Activated CD8-positive, alpha-beta T cell treated with anti-CD3 and anti-CD28 coated beads, Interleukin-2, amount 10 ng/mL, durations not matched to agents 7 days and 5 days (primary cell): ENCODE measurements at regions of chr11 and their contacts with region 1.

Region 1: GRCh38 chr11:64269380-64270234 is 14.9 kb downstream of the BAD start:
- DNase-seq: peak; percentile 97
- ATAC-seq: peak; percentile 74
- H3K4me3 Mint-ChIP-seq: peak overlapping the region; percentile 93
- H3K27ac Mint-ChIP-seq: peak overlapping the region; percentile 97
- H3K4me1 Mint-ChIP-seq: peaks cover 34% of the 10 kb centered on the region
- H3K27me3 Mint-ChIP-seq: no peaks in the 10 kb centered on the region

Region 2: GRCh38 chr11:64284048-64284961 is 14.7 kb after region 1 on chr11 and contains the start of gene BAD:
- CTCF ChIA-PET with region 1: interaction called, 21 read pairs
- POLR2A ChIA-PET with region 1: interaction called, 79 read pairs
- DNase-seq: peak; percentile 95
- ATAC-seq: peak; percentile 86
- H3K4me3 Mint-ChIP-seq: peak within 1 kb of the TSS; percentile 81
- H3K27ac Mint-ChIP-seq: peak within 1 kb of the TSS; percentile 89
- H3K4me1 Mint-ChIP-seq: peaks cover 25% of the 10 kb centered on the region
- H3K27me3 Mint-ChIP-seq: no peaks in the 10 kb centered on the region
- total RNA-seq, gene BAD: 38.3 to 43.9 TPM